ENCODE measurements at regions of chr5 and their contacts with region 1.

Region 1: DNA sequence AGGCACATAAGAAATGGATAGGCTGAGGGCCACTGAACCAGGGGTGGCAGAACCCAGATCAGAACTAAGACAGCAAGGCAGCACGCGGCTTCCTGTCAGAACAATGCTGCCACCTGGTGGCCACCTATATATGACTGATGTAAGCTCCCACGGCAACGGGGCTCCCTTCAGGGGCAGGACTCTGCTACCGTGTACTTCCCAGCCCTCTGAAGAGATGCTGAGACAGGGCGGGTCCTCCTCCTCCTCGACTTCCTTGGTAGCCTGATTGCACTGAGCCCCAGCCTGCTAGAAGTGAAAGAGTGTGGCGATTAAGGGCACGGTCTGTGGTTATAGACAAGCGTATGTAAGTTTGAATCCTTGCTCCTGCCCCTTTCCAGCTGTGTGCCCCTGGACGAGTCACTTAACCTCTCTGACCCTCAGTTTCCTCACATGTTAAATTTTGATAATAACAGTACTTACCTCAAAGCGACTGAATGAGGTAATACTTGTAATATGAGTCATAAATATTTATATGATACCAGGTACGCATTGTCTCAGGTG is 13.3 kb downstream of the RPS14 start:
- DNase-seq: peak; percentile 69
- H3K4me3 ChIP-seq: no peak overlapping the region
- H3K27ac ChIP-seq: no peak overlapping the region
- H3K4me1 ChIP-seq: no peaks in the 10 kb centered on the region
- H3K27me3 ChIP-seq: no peaks in the 10 kb centered on the region
- CTCF ChIP-seq: peak; percentile 80 to 83
- POLR2A ChIP-seq: no peak

Region 2: GRCh38 chr5:150129813-150130492 is 306.3 kb before region 1 on chr5:
- CTCF ChIA-PET with region 1: interaction called, 6 read pairs
- POLR2A ChIA-PET with region 1: no interaction called
- dilution Hi-C with region 1: no loop called
- intact Hi-C with region 1: loop called (anchors 1 kb)
- DNase-seq: peak; percentile 65
- H3K4me3 ChIP-seq: no peak overlapping the region
- H3K27ac ChIP-seq: no peak overlapping the region
- H3K4me1 ChIP-seq: peaks cover 14% of the 10 kb centered on the region
- H3K27me3 ChIP-seq: peaks cover 0 to 5% of the 10 kb centered on the region in 2 experiments
- CTCF ChIP-seq: peak; percentile 89 to 93
- POLR2A ChIP-seq: no peak

Region 3: GRCh38 chr5:150272526-150272925 is 163.7 kb before region 1 on chr5:
- CTCF ChIA-PET with region 1: interaction called, 11 read pairs
- POLR2A ChIA-PET with region 1: no interaction called
- dilution Hi-C with region 1: no loop called
- intact Hi-C with region 1: loop called (anchors 1 kb)
- DNase-seq: peak; percentile 18
- H3K4me3 ChIP-seq: no peak overlapping the region
- H3K27ac ChIP-seq: no peak overlapping the region
- H3K4me1 ChIP-seq: no peaks in the 10 kb centered on the region
- H3K27me3 ChIP-seq: peaks cover 9 to 19% of the 10 kb centered on the region in 2 experiments
- CTCF ChIP-seq: peak in 1 of 2 donors; percentile 42
- POLR2A ChIP-seq: no peak

Region 4: DNA sequence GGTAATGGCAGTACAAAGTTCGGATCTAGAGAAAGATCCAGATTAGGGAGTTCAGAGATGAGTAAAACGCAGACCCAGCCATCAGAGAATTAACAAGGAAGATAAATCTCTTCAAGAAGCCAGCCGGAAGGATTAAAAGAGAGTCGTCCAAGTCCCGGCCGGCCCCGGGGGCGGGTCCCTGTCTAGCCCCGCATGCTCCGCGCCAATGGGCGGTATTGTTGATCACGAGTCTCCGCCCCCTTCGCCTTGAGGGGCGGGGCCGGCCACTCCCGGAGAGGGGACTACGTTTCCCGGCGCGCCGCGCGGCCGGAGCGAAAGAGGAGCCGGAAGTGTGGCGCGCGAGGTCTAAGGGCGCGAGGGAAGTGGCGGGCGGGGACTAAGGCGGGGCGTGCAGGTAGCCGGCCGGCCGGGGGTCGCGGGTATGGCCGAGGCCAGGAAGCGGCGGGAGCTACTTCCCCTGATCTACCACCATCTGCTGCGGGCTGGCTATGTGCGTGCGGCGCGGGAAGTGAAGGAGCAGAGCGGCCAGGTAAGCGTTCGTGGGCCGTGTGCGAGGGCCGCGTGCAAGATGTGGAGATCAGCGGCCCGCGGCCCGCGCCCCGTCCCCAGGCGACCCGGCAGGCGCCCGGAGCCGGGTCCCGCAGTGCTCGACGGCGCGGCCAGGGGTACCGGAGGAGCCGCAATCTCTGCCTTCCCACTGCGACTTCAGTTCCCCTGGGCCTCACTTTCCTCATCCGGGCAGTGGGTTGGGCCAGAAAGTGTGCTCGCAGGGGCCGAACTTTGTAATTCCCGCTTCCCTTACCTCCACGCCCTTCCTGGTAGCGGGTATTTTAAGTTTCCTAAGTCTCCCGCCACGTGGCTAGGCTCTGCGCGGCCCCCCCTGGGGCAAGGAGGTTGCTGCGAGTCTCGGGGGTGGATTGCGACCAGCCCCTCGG is 78.6 kb before region 1 on chr5 and contains the start of gene TCOF1:
- CTCF ChIA-PET with region 1: interaction called, 6 read pairs
- POLR2A ChIA-PET with region 1: no interaction called
- dilution Hi-C with region 1: no loop called
- intact Hi-C with region 1: loop called (anchors 2 kb)
- DNase-seq: peak; percentile 95
- H3K4me3 ChIP-seq: peak within 1 kb of the TSS; percentile 62 to 89 (median 64)
- H3K27ac ChIP-seq: peak within 1 kb of the TSS; percentile 13
- H3K4me1 ChIP-seq: peaks cover 3% of the 10 kb centered on the region
- H3K27me3 ChIP-seq: no peaks in the 10 kb centered on the region
- CTCF ChIP-seq: no peak
- POLR2A ChIP-seq: peak; percentile 48
- total RNA-seq, gene TCOF1: 47.2 and 52.0 TPM in 2 replicates

Region 5: GRCh38 chr5:150412319-150413175 is 23.7 kb before region 1 on chr5 and contains the start of gene CD74:
- CTCF ChIA-PET with region 1: interaction called, 11 read pairs
- POLR2A ChIA-PET with region 1: no interaction called
- dilution Hi-C with region 1: no loop called
- intact Hi-C with region 1: no loop called
- DNase-seq: peak; percentile 42
- H3K4me3 ChIP-seq: no peak within 1 kb of the TSS
- H3K27ac ChIP-seq: no peak within 1 kb of the TSS
- H3K4me1 ChIP-seq: peaks cover 4% of the 10 kb centered on the region
- H3K27me3 ChIP-seq: no peaks in the 10 kb centered on the region
- CTCF ChIP-seq: no peak
- POLR2A ChIP-seq: no peak
- total RNA-seq, gene CD74: 0.76 and 1.3 TPM in 2 replicates